CD4-positive, alpha-beta T cell (primary cell): ENCODE measurements at regions of chr1 and their contacts with region 1.

Region 1: GRCh38 chr1:48725331-48726046 is 51.2 kb downstream of the BEND5 start:
- DNase-seq: no peak
- ATAC-seq: no peak
- H3K4me3 ChIP-seq: no peak overlapping the region
- H3K4me3 Mint-ChIP-seq: no peak overlapping the region
- H3K27ac ChIP-seq: no peak overlapping the region
- H3K27ac Mint-ChIP-seq: no peak overlapping the region
- H3K4me1 ChIP-seq: no peaks in the 10 kb centered on the region
- H3K4me1 Mint-ChIP-seq: no peaks in the 10 kb centered on the region
- H3K27me3 ChIP-seq: no peaks in the 10 kb centered on the region
- H3K27me3 Mint-ChIP-seq: no peaks in the 10 kb centered on the region
- CTCF ChIP-seq: no peak

Region 2: GRCh38 chr1:48741395-48741794 is 15.9 kb after region 1 on chr1:
- CTCF ChIA-PET with region 1: no interaction called
- POLR2A ChIA-PET with region 1: no interaction called
- intact Hi-C with region 1: no loop called
- DNase-seq: no peak
- ATAC-seq: no peak
- H3K4me3 ChIP-seq: no peak overlapping the region
- H3K4me3 Mint-ChIP-seq: no peak overlapping the region
- H3K27ac ChIP-seq: no peak overlapping the region
- H3K27ac Mint-ChIP-seq: no peak overlapping the region
- H3K4me1 ChIP-seq: no peaks in the 10 kb centered on the region
- H3K4me1 Mint-ChIP-seq: no peaks in the 10 kb centered on the region
- H3K27me3 ChIP-seq: no peaks in the 10 kb centered on the region
- H3K27me3 Mint-ChIP-seq: no peaks in the 10 kb centered on the region
- CTCF ChIP-seq: no peak

Region 3: GRCh38 chr1:48789903-48790302 is 64.4 kb after region 1 on chr1:
- CTCF ChIA-PET with region 1: no interaction called
- POLR2A ChIA-PET with region 1: no interaction called
- intact Hi-C with region 1: loop called in 1 of 2 experiments (anchors 10 kb)
- DNase-seq: no peak
- ATAC-seq: no peak
- H3K4me3 ChIP-seq: no peak overlapping the region
- H3K4me3 Mint-ChIP-seq: no peak overlapping the region
- H3K27ac ChIP-seq: no peak overlapping the region
- H3K27ac Mint-ChIP-seq: no peak overlapping the region
- H3K4me1 ChIP-seq: no peaks in the 10 kb centered on the region
- H3K4me1 Mint-ChIP-seq: no peaks in the 10 kb centered on the region
- H3K27me3 ChIP-seq: no peaks in the 10 kb centered on the region
- H3K27me3 Mint-ChIP-seq: peaks cover 7% of the 10 kb centered on the region
- CTCF ChIP-seq: no peak